Posterior vena cava (tissue), 2 donors: ENCODE measurements at regions of chr9 and their contacts with region 1.

Region 1: DNA sequence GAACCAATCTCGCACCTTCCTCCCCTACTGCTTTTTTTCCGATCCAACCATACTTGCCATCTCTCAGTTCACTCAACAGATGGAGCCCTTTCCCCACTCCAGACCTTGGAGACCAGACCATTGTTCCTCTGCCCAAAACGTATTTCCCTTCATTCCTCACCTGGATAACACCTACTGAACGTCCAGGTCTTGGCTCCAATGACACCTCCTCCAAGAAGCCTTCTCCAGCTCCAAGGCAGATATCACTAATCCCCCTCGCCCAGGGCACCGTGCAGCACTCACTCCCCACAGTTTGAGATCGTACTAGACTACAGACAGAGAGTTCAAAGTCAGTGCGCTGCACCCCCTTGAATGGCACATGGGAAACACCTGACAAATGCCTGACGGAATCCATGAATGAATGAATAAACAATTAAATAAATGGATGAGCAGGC is 47.1 kb upstream of the AKNA start:
- DNase-seq: no peak

Region 2: GRCh38 chr9:114472765-114473446 is 38.0 kb after region 1 on chr9:
- intact Hi-C with region 1: loop called in 1 of 2 experiments (anchors 1 kb)
- DNase-seq: no peak